ENCODE measurements at regions of chr5 and their contacts with region 1.

Region 1: DNA sequence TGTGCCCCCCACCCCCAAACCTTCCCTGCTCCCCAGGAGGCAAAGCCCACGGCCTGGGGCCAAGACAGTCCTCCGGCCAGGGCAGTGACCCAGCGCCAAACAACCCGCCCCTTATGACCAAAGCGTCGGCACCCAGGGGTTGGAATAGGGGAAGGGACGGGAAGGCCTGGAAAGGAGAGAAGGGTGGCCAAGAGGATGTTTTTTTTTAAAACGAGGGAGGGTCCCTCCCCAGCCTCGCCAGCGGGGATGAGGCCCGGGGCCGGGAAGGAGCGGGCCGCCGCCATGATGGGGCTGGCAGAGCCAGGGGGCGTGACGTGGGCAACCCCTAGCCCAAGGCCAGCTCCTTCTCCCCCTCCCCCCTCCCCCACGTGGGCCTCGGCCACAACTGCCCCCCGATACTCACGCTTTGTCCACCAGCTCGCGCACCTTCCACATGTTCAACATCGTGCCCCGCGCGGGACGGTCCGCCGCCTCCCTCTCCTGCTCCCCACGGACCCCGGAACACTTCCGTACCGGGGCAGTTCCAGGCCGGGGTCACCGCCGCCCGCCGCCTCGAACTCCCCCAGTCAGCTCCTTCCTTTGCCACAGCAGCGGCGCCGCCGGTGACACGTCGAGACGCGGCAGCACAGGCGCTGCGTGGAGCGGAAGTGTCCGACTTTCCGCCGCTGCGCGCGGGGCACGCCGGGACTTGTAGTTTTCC is at the start of gene CLINT1:
- DNase-seq: peak; percentile 65 to 92
- H3K4me3 ChIP-seq: peak within 1 kb of the TSS; percentile 60 to 90 (median 84)
- H3K27ac ChIP-seq: peak within 1 kb of the TSS; percentile 81
- H3K4me1 ChIP-seq: peaks cover 0 to 7% (median 4%) of the 10 kb centered on the region in 4 experiments; a peak in 3 of 7 replicates
- H3K27me3 ChIP-seq: no peaks in the 10 kb centered on the region
- CTCF ChIP-seq: no peak
- EP300 ChIP-seq: peak in 1 of 2 experiments; percentile 34; a peak in 1 of 3 replicates
- POLR2A ChIP-seq: peak; percentile 40 to 82
- RAD21 ChIP-seq: no peak; a peak in 1 of 4 replicates
- total RNA-seq, gene CLINT1: 84.7 and 85.9 TPM in 2 replicates

Region 2: DNA sequence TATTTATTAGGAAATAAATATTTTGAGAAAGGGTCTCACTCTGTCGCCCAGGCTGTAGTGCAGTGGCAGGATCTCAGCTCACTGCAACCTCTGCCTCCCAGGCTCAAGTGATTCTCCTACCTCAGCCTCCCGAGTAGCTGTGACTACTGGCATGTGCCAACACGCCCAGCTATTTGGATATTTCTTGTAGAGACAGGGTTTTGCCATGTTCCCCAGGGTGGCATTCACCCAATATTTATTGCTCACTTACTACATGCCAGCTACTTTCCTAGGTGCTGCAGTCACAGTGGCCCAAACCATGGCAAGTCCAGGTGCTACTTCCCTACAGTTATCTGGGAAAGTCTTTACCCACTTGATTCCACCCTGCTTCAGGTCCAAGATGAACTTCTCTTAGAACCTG is 707.7 kb before region 1 on chr5:
- CTCF ChIA-PET with region 1: no interaction called
- POLR2A ChIA-PET with region 1: no interaction called
- DNase-seq: no peak
- H3K4me3 ChIP-seq: no peak overlapping the region
- H3K27ac ChIP-seq: no peak overlapping the region
- H3K4me1 ChIP-seq: no peaks in the 10 kb centered on the region
- H3K27me3 ChIP-seq: no peaks in the 10 kb centered on the region
- CTCF ChIP-seq: no peak
- EP300 ChIP-seq: no peak
- POLR2A ChIP-seq: no peak
- RAD21 ChIP-seq: no peak

Region 3: GRCh38 chr5:157812086-157812485 is 46.6 kb before region 1 on chr5:
- CTCF ChIA-PET with region 1: interaction called, 12 read pairs
- POLR2A ChIA-PET with region 1: interaction called, 3 read pairs
- DNase-seq: no peak
- H3K4me3 ChIP-seq: no peak overlapping the region
- H3K27ac ChIP-seq: no peak overlapping the region
- H3K4me1 ChIP-seq: no peaks in the 10 kb centered on the region
- H3K27me3 ChIP-seq: no peaks in the 10 kb centered on the region
- CTCF ChIP-seq: no peak
- EP300 ChIP-seq: no peak
- POLR2A ChIP-seq: no peak
- RAD21 ChIP-seq: no peak

Region 4: DNA sequence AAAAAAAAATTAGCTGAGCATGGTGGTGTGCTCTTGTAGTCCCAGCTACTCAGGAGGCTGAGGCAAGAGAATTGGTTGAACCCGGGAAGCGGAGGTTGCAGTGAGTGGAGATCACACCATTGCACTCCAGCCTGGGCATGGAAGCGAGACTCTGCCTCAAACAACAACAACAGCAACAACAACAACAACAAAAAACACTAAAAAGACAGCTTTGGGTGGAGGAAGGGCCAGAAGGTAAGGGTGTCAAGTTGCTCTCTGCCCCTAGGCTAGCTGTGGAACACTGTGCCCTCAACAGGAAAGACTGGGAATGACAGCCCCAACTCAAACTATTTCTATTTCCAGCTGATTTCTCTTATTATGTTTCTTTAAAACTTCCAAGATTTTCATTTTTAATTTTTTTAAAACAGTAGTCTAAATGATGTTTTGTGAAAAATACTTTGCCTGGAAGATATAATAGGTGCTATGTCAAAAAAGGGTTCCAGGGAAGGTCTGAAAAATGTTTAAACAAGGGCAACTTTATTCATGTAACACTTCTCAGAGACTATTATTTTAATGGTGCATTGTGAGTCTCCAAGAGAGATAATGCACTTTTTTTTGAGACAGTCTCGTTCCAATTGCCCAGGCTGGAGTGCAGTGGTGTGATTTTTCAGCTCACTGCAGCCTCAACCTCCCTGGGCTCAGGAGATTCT is 29.6 kb before region 1 on chr5:
- CTCF ChIA-PET with region 1: interaction called, 18 read pairs
- POLR2A ChIA-PET with region 1: interaction called, 6 read pairs
- DNase-seq: peak in 1 of 2 experiments; percentile 57
- H3K4me3 ChIP-seq: no peak overlapping the region
- H3K27ac ChIP-seq: no peak overlapping the region
- H3K4me1 ChIP-seq: 0 out of 7 replicates have a peak, but pooled peaks cover 0 to 2% (median 0%) of the 10 kb centered on the region in 4 experiments
- H3K27me3 ChIP-seq: no peaks in the 10 kb centered on the region
- CTCF ChIP-seq: peak; percentile 48 to 69 (median 50)
- EP300 ChIP-seq: no peak
- POLR2A ChIP-seq: no peak
- RAD21 ChIP-seq: peak; percentile 25 to 38; a peak in 2 of 4 replicates

Region 5: DNA sequence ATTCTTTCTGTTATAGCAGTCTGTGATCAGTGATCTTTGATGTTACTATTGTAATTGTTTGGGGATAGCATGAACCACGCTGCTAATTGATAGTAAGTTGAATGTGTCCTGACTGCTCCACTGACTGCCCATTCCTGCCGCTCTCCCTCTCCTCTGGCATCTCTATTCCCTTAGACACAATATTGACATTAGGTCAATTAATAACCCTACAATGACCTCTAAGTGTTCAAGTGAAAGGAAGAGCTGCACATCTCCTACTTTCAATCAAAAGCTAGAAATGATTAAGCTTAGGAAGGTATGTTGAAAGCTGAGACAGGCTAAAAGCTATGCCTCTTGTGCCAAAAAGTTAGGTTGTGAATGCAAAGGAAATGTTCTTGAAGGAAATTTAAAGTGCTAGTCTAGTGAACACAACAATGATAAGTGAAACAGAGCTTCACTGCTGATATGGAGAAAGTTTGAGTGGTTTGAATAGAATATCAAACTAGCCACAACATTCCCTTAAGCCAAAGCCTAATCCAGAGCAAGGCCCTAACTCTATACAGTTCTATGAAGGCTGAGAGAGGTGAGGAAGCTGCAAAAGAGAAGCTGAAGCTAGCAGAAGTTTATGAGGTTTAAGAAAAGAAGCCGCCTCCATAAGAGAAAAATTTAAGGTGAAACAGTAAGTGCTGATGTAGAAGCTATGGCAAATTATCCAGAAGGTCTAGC is 12.6 kb before region 1 on chr5:
- CTCF ChIA-PET with region 1: interaction called, 23 read pairs
- POLR2A ChIA-PET with region 1: interaction called, 9 read pairs
- DNase-seq: no peak
- H3K4me3 ChIP-seq: no peak overlapping the region
- H3K27ac ChIP-seq: no peak overlapping the region
- H3K4me1 ChIP-seq: peaks cover 0 to 3% (median 0%) of the 10 kb centered on the region in 4 experiments; a peak in 1 of 7 replicates
- H3K27me3 ChIP-seq: no peaks in the 10 kb centered on the region; a peak in 1 of 7 replicates
- CTCF ChIP-seq: no peak
- EP300 ChIP-seq: no peak
- POLR2A ChIP-seq: no peak
- RAD21 ChIP-seq: no peak

Region 6: GRCh38 chr5:157877821-157878220 is 19.1 kb after region 1 on chr5:
- CTCF ChIA-PET with region 1: interaction called, 13 read pairs
- POLR2A ChIA-PET with region 1: interaction called, 5 read pairs
- DNase-seq: no peak
- H3K4me3 ChIP-seq: no peak overlapping the region
- H3K27ac ChIP-seq: no peak overlapping the region
- H3K4me1 ChIP-seq: peaks cover 0 to 7% (median 3%) of the 10 kb centered on the region in 4 experiments; a peak in 4 of 7 replicates
- H3K27me3 ChIP-seq: peaks cover 0 to 5% (median 4%) of the 10 kb centered on the region in 4 experiments; a peak in 3 of 7 replicates
- CTCF ChIP-seq: no peak
- EP300 ChIP-seq: no peak
- POLR2A ChIP-seq: no peak
- RAD21 ChIP-seq: no peak

Region 7: GRCh38 chr5:157917899-157918809 is 59.5 kb after region 1 on chr5:
- CTCF ChIA-PET with region 1: interaction called, 22 read pairs
- POLR2A ChIA-PET with region 1: interaction called, 4 read pairs
- DNase-seq: peak; percentile 50 to 75
- H3K4me3 ChIP-seq: no peak overlapping the region
- H3K27ac ChIP-seq: no peak overlapping the region
- H3K4me1 ChIP-seq: peaks cover 0 to 10% (median 6%) of the 10 kb centered on the region in 4 experiments; a peak in 6 of 7 replicates
- H3K27me3 ChIP-seq: no peaks in the 10 kb centered on the region
- CTCF ChIP-seq: peak; percentile 57 to 83 (median 74)
- EP300 ChIP-seq: no peak
- POLR2A ChIP-seq: no peak
- RAD21 ChIP-seq: peak; percentile 73 to 80

Measured in H1 (cell line).